ENCODE measurements at regions of chr3 and their contacts with region 1.

Region 1: GRCh38 chr3:181709537-181710279 is 2.0 kb upstream of the SOX2 start:
- DNase-seq: peak; percentile 36 to 79 (median 66)
- H3K4me3 ChIP-seq: no peak overlapping the region
- H3K27ac ChIP-seq: no peak overlapping the region
- H3K4me1 ChIP-seq: no peaks in the 10 kb centered on the region
- H3K27me3 ChIP-seq: no peaks in the 10 kb centered on the region
- CTCF ChIP-seq: peak; percentile 26 to 47 (median 38)
- EP300 ChIP-seq: no peak
- POLR2A ChIP-seq: no peak

Region 2: GRCh38 chr3:181851059-181851458 is 141.4 kb after region 1 on chr3:
- intact Hi-C with region 1: no loop called
- DNase-seq: no peak
- H3K4me3 ChIP-seq: no peak overlapping the region
- H3K27ac ChIP-seq: no peak overlapping the region
- H3K4me1 ChIP-seq: no peaks in the 10 kb centered on the region
- H3K27me3 ChIP-seq: no peaks in the 10 kb centered on the region
- CTCF ChIP-seq: no peak
- EP300 ChIP-seq: no peak
- POLR2A ChIP-seq: no peak

Region 3: DNA sequence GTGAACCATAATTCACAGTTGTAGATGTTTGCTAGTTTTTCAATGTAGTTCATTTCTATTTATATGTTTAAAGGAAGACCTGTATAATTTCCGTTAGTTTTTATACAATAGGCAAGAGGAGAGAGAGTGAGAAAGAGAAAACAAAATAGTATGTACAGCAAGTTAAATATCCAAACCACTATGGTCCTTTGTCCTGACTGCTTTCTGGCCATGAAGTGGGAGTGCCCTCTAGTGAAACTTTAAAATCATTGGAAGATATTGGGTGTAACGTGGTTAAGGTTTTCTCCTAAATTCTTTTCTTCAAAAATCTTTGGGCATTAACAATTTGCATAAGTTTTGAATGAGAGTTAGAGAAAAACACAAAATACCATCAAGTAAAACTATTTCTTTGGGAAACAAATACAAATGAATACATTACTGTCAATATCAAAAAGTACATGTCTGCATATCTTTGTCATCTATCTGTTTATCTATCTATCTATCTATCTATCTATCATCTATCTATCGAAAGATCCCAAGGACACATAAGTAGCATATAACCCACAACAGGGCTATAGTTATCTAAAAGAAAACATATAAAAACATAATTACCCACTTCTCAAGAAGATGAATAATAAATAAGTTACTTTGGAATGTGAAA is 549.0 kb after region 1 on chr3:
- intact Hi-C with region 1: loop called in 1 of 4 experiments (anchors 10 kb)
- DNase-seq: no peak
- H3K4me3 ChIP-seq: no peak overlapping the region
- H3K27ac ChIP-seq: no peak overlapping the region
- H3K4me1 ChIP-seq: no peaks in the 10 kb centered on the region
- H3K27me3 ChIP-seq: no peaks in the 10 kb centered on the region
- CTCF ChIP-seq: peak in 1 of 3 donors; percentile 31
- EP300 ChIP-seq: no peak
- POLR2A ChIP-seq: no peak

Region 4: DNA sequence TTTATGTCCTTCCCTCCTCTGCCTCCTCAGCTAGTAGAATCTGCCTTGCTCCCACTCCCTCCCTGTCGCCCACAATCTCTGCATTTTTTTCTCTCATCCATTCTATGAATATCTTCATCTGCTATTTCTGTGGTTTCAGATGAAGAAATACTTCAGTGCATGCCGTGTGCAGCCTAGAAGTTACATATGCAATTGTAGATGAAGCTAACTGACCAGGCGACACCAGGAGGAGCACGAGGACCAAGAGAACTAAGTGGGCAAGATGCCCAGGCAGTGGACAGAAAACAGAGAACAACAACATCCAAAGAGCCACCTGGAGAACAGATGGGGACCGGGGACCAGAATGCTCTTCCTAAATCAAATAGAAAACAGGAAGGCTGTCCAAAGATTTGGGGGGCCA is 962.2 kb after region 1 on chr3:
- intact Hi-C with region 1: loop called in 1 of 4 experiments (anchors 10 kb)
- DNase-seq: no peak
- H3K4me3 ChIP-seq: no peak overlapping the region
- H3K27ac ChIP-seq: no peak overlapping the region
- H3K4me1 ChIP-seq: no peaks in the 10 kb centered on the region
- H3K27me3 ChIP-seq: no peaks in the 10 kb centered on the region
- CTCF ChIP-seq: no peak
- EP300 ChIP-seq: no peak
- POLR2A ChIP-seq: no peak